Activated naive CD4-positive, alpha-beta T cell treated with anti-CD3 and anti-CD28 coated beads for 36 hours (primary cell): ENCODE measurements at regions of chr19 and their contacts with region 1.

Region 1: DNA sequence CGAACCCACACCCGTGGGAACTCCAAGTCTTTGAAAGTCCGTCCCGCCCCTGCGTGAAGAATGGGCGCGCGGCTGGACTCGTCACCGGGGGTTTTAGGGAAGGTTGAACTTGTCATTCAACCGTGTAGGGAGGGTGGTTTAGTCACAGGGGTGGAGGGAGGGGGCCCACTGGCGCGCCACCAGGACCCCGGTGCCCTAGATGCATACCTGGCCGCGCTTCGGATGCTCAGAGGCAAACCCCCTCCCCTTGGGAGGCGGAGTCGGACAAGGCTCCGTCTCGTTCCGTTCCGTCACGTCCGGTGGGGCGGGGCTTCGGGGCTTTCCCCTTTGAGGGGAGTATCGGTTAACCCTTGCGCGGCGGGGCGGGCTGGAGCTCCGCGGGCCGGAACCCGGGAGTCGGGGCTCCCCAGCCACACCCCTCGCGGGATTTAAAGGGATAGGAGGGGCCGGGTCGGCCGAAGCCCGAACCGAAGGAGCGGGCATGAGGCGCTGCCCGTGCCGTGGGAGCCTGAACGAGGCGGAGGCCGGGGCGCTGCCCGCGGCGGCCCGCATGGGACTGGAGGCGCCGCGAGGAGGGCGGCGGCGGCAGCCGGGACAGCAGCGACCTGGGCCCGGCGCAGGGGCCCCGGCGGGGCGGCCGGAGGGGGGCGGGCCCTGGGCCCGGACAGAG is at the starts of genes COQ8B and ITPKC:
- DNase-seq: peak; percentile 100
- H3K4me3 Mint-ChIP-seq: peak within 1 kb of the TSS; percentile 95
- H3K27ac Mint-ChIP-seq: peak within 1 kb of the TSS; percentile 97
- H3K4me1 Mint-ChIP-seq: peaks cover 54% of the 10 kb centered on the region
- H3K27me3 Mint-ChIP-seq: no peaks in the 10 kb centered on the region
- total RNA-seq, gene COQ8B: 19.8 to 21.3 TPM
- total RNA-seq, gene ITPKC: 4.4 to 4.7 TPM

Region 2: GRCh38 chr19:40348125-40348913 is 368.5 kb before region 1 on chr19 and contains the starts of genes C19orf47 and PLD3:
- CTCF ChIA-PET with region 1: no interaction called
- intact Hi-C with region 1: loop called (anchors 1 kb)
- DNase-seq: peak; percentile 99
- H3K4me3 Mint-ChIP-seq: peak within 1 kb of the TSS; percentile 89
- H3K27ac Mint-ChIP-seq: peak within 1 kb of the TSS; percentile 78
- H3K4me1 Mint-ChIP-seq: peaks cover 29% of the 10 kb centered on the region
- H3K27me3 Mint-ChIP-seq: no peaks in the 10 kb centered on the region
- total RNA-seq, gene C19orf47: 13.5 to 14.6 TPM
- total RNA-seq, gene PLD3: 57.6 to 58.2 TPM

Region 3: GRCh38 chr19:40465557-40466150 is 251.1 kb before region 1 on chr19 and contains the start of gene BLVRB:
- CTCF ChIA-PET with region 1: no interaction called
- intact Hi-C with region 1: loop called (anchors 1 kb)
- DNase-seq: peak; percentile 100
- H3K4me3 Mint-ChIP-seq: peak within 1 kb of the TSS; percentile 78
- H3K27ac Mint-ChIP-seq: peak within 1 kb of the TSS; percentile 50
- H3K4me1 Mint-ChIP-seq: peaks cover 26% of the 10 kb centered on the region
- H3K27me3 Mint-ChIP-seq: peaks cover 10% of the 10 kb centered on the region
- total RNA-seq, gene BLVRB: 29.4 to 30.2 TPM

Region 4: GRCh38 chr19:40662921-40663694 is 53.7 kb before region 1 on chr19:
- CTCF ChIA-PET with region 1: interaction called, 4 read pairs
- intact Hi-C with region 1: loop called (anchors 2 kb)
- DNase-seq: peak; percentile 91
- H3K4me3 Mint-ChIP-seq: peak overlapping the region; percentile 78
- H3K27ac Mint-ChIP-seq: peak overlapping the region; percentile 71
- H3K4me1 Mint-ChIP-seq: peaks cover 20% of the 10 kb centered on the region
- H3K27me3 Mint-ChIP-seq: no peaks in the 10 kb centered on the region

Region 5: GRCh38 chr19:40750059-40750873 is 33.5 kb after region 1 on chr19 and contains the start of gene ACTMAP:
- CTCF ChIA-PET with region 1: interaction called, 7 read pairs
- intact Hi-C with region 1: loop called (anchors 1 kb)
- DNase-seq: peak; percentile 100
- H3K4me3 Mint-ChIP-seq: peak within 1 kb of the TSS; percentile 99
- H3K27ac Mint-ChIP-seq: peak within 1 kb of the TSS; percentile 99
- H3K4me1 Mint-ChIP-seq: peaks cover 33% of the 10 kb centered on the region
- H3K27me3 Mint-ChIP-seq: no peaks in the 10 kb centered on the region
- total RNA-seq, gene ACTMAP: 23.0 to 25.0 TPM

Region 6: GRCh38 chr19:40798223-40798996 is 81.6 kb after region 1 on chr19:
- CTCF ChIA-PET with region 1: interaction called, 3 read pairs
- intact Hi-C with region 1: loop called (anchors 1 kb)
- DNase-seq: peak; percentile 100
- H3K4me3 Mint-ChIP-seq: peak overlapping the region; percentile 92
- H3K27ac Mint-ChIP-seq: peak overlapping the region; percentile 97
- H3K4me1 Mint-ChIP-seq: peaks cover 49% of the 10 kb centered on the region
- H3K27me3 Mint-ChIP-seq: no peaks in the 10 kb centered on the region

Region 7: GRCh38 chr19:41031649-41032328 is 315.0 kb after region 1 on chr19:
- CTCF ChIA-PET with region 1: no interaction called
- intact Hi-C with region 1: no loop called
- DNase-seq: no peak
- H3K4me3 Mint-ChIP-seq: no peak overlapping the region
- H3K27ac Mint-ChIP-seq: no peak overlapping the region
- H3K4me1 Mint-ChIP-seq: peaks cover 3% of the 10 kb centered on the region
- H3K27me3 Mint-ChIP-seq: peaks cover under 1% of the 10 kb centered on the region